Activated CD4-positive, alpha-beta memory T cell treated with anti-CD3 and anti-CD28 coated beads, Interleukin-2, amount 10 ng/mL, durations not matched to agents 7 days and 5 days (primary cell): ENCODE measurements at regions of chrX and their contacts with region 1.

Region 1: DNA sequence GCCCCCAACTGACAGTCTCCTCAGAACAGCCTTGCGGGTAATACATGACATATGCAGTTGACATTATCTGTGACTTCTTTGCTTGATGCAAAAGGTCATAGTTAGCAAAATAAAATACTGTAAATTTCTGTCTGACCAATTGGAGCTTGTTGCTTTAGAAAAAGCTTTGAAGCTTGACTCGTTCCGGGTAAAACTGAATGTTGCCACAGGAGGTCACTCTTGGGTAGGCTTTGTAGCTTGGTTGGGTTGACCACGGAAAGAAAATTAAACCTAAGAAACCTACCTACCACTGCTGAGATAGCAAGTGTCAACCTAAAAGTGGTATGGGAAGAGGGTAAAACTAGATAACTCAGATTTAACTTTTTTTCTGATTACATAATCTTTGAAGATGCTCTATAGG is 23.2 kb downstream of the PRPS2 start:
- DNase-seq: peak; percentile 56
- H3K4me3 Mint-ChIP-seq: no peak overlapping the region
- H3K27ac Mint-ChIP-seq: no peak overlapping the region
- H3K4me1 Mint-ChIP-seq: peaks cover 2% of the 10 kb centered on the region
- H3K27me3 Mint-ChIP-seq: no peaks in the 10 kb centered on the region

Region 2: DNA sequence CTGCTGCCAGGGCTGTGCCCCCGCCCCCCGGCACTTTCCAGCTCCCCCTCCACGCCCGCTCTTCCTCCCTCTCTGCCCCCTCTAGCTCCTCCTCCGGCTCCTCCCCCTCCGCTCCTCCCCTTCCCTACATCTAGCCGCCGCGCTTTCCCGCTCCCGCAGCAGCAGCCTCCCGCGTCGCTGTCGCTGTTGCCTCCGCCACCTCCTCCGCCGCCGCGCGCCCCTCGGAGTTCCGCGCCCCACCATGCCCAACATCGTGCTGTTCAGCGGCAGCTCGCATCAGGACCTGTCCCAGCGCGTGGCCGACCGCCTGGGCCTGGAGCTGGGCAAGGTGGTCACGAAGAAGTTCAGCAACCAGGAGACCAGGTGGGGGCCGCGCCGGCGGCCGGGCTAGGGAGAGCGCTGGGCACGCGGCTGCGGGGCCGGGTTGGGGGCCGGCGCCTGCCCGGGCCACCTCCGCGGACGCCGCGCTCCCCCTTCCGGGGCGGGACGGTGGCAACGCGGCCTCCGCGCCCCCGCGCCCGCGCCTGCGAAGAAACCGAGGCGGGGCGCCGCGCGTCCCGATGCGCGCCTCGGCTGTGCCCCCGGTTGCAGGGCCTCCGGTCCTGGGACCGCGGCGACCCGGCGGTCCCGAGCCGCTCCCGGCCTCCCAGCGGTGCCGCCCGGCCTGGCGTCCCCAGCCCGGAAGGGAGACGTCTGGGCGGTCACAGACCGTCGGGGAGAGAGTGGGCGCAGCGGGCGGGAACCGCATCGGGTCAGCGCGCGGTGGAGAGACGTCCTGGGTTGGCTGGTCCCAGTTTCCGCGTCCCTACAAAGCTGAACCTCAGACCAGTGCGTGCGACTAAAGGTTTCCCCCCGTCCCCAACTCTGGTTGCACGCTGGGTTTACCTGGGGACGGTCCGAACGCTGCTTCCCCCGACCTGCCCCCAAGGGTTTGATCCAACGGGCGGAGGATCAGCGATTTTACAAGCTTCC is 22.9 kb before region 1 on chrX and contains the start of gene PRPS2:
- CTCF ChIA-PET with region 1: interaction called, 15 read pairs
- POLR2A ChIA-PET with region 1: interaction called, 3 read pairs
- DNase-seq: peak; percentile 72
- H3K4me3 Mint-ChIP-seq: peak within 1 kb of the TSS; percentile 82
- H3K27ac Mint-ChIP-seq: peak within 1 kb of the TSS; percentile 74
- H3K4me1 Mint-ChIP-seq: peaks cover 31% of the 10 kb centered on the region
- H3K27me3 Mint-ChIP-seq: peaks cover 8% of the 10 kb centered on the region
- total RNA-seq, gene PRPS2: 64.6 to 66.9 TPM

Region 3: DNA sequence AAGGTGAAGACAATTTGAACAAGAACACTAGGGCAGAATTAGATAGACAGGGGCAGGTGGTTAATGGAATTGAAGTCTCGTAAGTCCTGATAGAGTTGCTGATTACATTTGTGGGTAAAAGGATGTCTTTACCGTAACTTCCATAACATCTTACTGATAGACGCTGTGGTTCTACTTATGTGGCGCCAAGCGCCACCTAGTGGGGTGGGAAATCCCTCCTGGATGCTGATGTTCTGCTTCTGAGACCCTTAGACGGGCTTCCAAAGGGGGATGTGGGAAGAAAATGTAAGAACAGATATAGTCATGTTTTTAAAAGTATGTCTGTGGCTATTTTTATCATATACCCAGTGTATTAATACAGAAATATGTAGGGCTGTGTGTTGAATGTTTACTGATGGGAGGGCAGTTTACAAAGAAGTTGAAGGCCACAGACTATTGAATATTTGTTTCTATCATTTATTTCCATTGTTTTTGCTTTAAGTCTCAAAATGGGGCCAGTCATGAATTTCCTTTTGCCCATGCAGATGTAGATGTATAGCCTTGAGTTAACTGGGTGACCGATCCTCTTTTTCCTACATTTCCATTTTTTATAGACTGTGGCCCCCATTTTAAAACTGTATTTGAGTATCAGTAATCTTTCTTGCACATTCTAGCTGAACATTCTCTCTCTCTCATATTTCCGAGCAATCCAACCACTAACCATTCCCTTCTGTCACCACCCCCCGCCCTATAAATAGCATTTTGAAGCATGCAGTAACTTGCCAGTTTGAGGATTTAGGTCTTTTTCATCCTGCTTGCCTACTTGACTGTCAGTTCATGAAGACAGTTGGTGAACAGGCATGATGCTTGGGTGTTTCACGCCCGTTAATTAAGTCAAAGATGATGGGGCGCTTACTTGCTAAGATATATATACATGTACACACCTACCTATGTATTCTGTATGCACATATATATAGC is 79.9 kb after region 1 on chrX:
- CTCF ChIA-PET with region 1: interaction called, 18 read pairs
- POLR2A ChIA-PET with region 1: interaction called, 3 read pairs
- DNase-seq: peak; percentile 46
- H3K4me3 Mint-ChIP-seq: no peak overlapping the region
- H3K27ac Mint-ChIP-seq: no peak overlapping the region
- H3K4me1 Mint-ChIP-seq: peaks cover 27% of the 10 kb centered on the region
- H3K27me3 Mint-ChIP-seq: no peaks in the 10 kb centered on the region

Region 4: DNA sequence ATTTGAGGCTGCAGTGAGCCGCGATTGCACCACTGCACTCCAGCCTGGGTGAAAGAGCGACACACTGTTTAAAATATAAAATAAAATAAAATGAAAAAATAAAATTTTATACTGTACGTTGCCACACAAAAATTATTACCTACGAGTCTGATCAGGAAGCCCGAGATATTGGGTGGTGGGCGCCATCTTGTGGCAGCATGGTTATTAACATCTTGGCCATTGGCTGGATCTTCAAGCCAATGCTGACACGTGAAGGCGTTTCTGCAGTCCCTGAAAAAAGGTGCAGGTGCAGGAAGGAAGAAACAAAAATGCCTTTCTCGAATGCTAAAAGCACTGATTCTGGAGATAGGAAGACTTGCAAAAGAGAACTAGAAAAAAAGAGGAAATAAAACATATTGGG is 87.1 kb after region 1 on chrX:
- CTCF ChIA-PET with region 1: interaction called, 16 read pairs
- POLR2A ChIA-PET with region 1: interaction called, 3 read pairs
- DNase-seq: peak; percentile 69
- H3K4me3 Mint-ChIP-seq: no peak overlapping the region
- H3K27ac Mint-ChIP-seq: no peak overlapping the region
- H3K4me1 Mint-ChIP-seq: peaks cover 3% of the 10 kb centered on the region
- H3K27me3 Mint-ChIP-seq: peaks cover 4% of the 10 kb centered on the region

Region 5: DNA sequence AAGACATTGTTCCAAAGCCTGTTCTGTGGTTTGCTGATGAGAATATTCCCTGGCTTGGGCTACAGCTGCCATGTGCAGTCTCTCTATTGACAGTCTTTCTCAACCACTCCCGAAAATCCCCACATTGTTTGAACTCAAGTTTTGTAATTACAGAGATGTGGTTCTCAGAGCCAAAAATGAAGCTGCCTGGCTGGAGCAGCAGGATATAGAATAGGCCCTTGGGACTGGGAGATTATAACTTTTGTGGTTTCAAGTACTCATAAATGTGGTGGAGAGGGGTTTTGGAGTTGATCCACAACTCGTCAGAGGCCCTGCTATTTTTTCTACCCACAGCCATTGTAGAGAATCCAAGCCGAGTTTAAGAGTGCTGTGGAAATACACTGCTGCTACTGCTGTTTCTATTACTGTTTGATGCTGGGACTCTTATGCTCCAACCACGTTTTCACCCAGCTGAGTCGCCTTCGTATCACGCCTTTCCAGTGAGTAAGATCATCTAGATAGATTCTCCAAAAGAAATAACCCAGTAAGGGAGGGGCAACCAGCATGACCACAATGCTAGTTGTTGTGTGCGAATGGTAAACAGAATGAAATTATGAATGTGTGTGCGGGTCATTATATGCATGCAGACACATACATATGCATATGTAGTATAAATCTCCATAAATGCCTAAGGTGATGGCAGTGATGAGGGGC is 562.6 kb after region 1 on chrX:
- CTCF ChIA-PET with region 1: no interaction called
- POLR2A ChIA-PET with region 1: no interaction called
- DNase-seq: no peak
- H3K4me3 Mint-ChIP-seq: no peak overlapping the region
- H3K27ac Mint-ChIP-seq: no peak overlapping the region
- H3K4me1 Mint-ChIP-seq: peaks cover 22% of the 10 kb centered on the region
- H3K27me3 Mint-ChIP-seq: no peaks in the 10 kb centered on the region